Activated CD4-positive, alpha-beta T cell treated with anti-CD3 and anti-CD28 coated beads, Interleukin-2, amount 10 ng/mL, durations not matched to agents 24 days and 14 days (primary cell): ENCODE measurements at regions of chr11 and their contacts with region 1.

Region 1: DNA sequence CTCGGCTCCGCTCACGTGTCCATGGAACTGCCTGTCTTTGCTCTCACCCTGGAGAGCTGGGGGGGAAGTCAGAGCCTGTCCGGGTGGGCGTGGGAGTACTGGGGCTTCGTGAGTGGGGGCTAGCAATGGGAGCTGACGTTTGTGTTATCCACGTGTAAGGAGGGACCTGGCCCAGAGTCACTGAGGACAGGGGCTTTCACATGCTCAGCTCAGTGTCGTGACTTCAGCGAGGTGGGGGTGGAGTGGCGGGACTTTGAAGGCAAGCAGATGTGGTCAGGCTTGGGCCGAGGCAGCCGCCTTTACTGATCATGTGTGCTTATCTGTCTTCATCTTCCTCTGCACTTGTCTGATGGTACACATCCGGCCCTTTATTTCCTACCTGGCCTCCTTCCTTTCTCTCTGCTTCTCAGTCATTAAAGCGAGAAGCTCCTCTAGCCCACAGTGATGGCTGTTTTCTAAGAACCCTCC is 113.1 kb upstream of the NNMT start:
- DNase-seq: peak; percentile 92
- H3K4me3 Mint-ChIP-seq: peak overlapping the region; percentile 51
- H3K27ac Mint-ChIP-seq: peak overlapping the region; percentile 94
- H3K4me1 Mint-ChIP-seq: peaks cover 74% of the 10 kb centered on the region
- H3K27me3 Mint-ChIP-seq: no peaks in the 10 kb centered on the region

Region 2: DNA sequence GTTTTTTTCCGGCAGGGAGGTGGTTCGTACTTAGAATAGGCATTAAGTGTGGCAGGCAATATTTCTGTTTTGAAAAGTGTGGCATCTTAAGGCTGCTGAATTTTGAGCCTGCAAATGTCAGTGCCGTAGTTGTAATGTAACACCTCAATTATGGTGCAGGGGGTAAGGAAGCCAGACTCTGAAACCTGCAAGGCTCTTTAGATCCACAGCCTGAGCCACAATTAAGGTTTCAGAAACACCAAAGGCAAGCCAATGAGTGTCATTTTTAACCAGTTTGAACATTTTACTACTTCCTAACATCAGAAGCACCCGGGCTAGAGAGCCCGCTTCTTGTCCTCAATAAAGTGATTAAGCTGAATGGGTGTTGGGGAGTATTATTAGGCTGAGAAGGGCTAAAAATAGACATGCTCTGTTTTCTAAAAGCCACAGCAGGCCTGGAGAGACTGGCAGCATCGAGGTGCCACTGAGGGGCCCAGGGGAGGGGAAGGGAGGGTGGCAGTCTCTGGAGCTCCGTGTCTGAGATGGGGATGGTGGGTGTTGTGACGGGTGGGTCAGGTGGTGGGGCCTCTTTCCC is 10.1 kb before region 1 on chr11:
- intact Hi-C with region 1: loop called (anchors 1 kb)
- DNase-seq: peak; percentile 78
- H3K4me3 Mint-ChIP-seq: peak overlapping the region; percentile 53
- H3K27ac Mint-ChIP-seq: peak overlapping the region; percentile 22
- H3K4me1 Mint-ChIP-seq: peaks cover 53% of the 10 kb centered on the region
- H3K27me3 Mint-ChIP-seq: no peaks in the 10 kb centered on the region

Region 3: DNA sequence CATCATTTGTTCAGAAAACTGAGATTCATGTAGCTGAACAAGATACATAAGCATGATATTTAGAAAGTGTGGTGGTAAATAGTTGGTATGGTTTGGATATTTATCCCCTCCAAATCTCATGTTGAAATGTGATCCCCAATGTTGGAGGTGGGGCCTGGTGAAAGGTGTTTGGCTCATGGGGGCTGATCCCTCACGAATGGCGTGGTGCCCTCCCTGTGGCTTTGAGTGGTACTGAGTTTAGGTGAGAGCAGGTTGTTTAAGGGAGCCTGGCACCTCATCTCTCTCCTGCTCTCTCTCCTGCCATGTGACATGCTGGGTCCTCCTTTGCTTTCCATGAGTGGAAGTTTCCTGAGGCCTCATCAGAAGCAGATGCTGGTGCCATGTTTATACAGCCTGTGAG is 328.5 kb after region 1 on chr11:
- intact Hi-C with region 1: no loop called
- DNase-seq: no peak
- H3K4me3 Mint-ChIP-seq: no peak overlapping the region
- H3K27ac Mint-ChIP-seq: no peak overlapping the region
- H3K4me1 Mint-ChIP-seq: no peaks in the 10 kb centered on the region
- H3K27me3 Mint-ChIP-seq: peaks cover 9% of the 10 kb centered on the region